Prostate gland (tissue), 2 donors: ENCODE measurements at regions of chr10 and their contacts with region 1.

Region 1: GRCh38 chr10:73167783-73168464 is at the starts of genes ECD and FAM149B1:
- DNase-seq: peak; percentile 91
- H3K4me3 ChIP-seq: peak within 1 kb of the TSS; percentile 75 to 86
- H3K27ac ChIP-seq: peak within 1 kb of the TSS; percentile 93 to 95
- H3K4me1 ChIP-seq: peaks cover 11% of the 10 kb centered on the region
- H3K27me3 ChIP-seq: no peaks in the 10 kb centered on the region
- CTCF ChIP-seq: peak in 3 of 4 experiments; percentile 19 to 59 (median 56)
- POLR2A ChIP-seq: peak; percentile 94
- total RNA-seq, gene ECD: 26.0 to 40.7 TPM
- total RNA-seq, gene FAM149B1: 15.8 to 17.7 TPM

Region 2: DNA sequence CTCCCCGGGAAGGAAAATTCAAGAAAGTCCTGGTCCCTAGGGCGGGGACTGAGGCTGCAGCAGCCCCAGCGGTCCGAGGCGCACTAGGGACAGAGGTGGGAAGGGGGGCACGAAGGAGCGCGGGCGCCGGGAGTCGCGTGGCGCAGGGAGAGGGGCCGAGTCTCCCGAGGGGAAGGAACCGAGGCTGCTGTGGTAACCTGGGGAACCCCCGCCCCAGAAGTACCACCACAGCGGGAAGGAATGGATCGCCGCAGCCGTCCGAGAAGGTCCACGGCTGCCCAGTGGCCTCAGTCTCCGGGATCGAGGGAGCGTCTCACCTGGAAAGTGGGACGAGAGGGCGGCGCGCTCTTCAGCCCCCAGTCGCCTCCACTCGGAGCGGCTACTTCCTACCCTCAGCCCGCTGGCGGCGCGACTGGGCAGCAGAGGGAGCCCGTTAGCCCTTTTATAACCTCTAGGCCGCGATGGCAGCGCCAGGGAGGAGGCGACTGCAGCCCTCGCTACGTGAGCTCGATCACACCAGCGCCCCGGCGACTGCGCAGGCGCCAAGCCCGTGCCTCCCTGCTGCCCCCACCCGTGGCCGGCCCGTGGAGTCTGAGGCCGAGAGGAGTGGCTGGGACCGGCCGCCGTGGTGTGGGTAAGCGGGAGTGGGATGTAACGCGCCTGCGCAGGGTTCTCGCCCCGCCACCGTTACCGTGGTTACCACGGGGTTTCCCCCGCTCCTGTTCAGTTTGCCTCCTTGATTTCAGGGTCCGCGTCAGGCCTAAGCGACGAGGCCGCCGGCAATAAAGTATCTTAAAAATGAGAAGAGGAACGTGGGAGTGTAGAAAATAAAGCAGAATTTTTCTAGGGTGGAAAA is 71.2 kb before region 1 on chr10 and contains the start of gene P4HA1:
- intact Hi-C with region 1: loop called (anchors 5 kb)
- DNase-seq: peak; percentile 98
- H3K4me3 ChIP-seq: peak within 1 kb of the TSS; percentile 58 to 68
- H3K27ac ChIP-seq: peak within 1 kb of the TSS; percentile 93 to 96
- H3K4me1 ChIP-seq: no peaks in the 10 kb centered on the region
- H3K27me3 ChIP-seq: no peaks in the 10 kb centered on the region
- CTCF ChIP-seq: peak; percentile 39 to 90 (median 77)
- POLR2A ChIP-seq: peak; percentile 91
- total RNA-seq, gene P4HA1: 16.2 to 26.8 TPM

Region 3: GRCh38 chr10:73252445-73253224 is 84.7 kb after region 1 on chr10 and contains the start of gene MRPS16:
- intact Hi-C with region 1: loop called (anchors 5 kb)
- DNase-seq: peak; percentile 95
- H3K4me3 ChIP-seq: peak within 1 kb of the TSS; percentile 74 to 87
- H3K27ac ChIP-seq: peak within 1 kb of the TSS; percentile 84 to 87
- H3K4me1 ChIP-seq: peaks cover 9% of the 10 kb centered on the region
- H3K27me3 ChIP-seq: no peaks in the 10 kb centered on the region
- CTCF ChIP-seq: peak in 1 of 4 experiments; percentile 26
- POLR2A ChIP-seq: peak; percentile 76
- total RNA-seq, gene MRPS16: 47.0 to 51.9 TPM